ENCODE measurements at regions of chr14 and their contacts with region 1.

Region 1: GRCh38 chr14:50875359-50876070 is 3.7 kb downstream of the ABHD12B start:
- DNase-seq: peak; percentile 96
- H3K4me3 ChIP-seq: peak overlapping the region; percentile 63
- H3K27ac ChIP-seq: peak overlapping the region; percentile 95
- H3K4me1 ChIP-seq: peaks cover 66% of the 10 kb centered on the region
- CTCF ChIP-seq: no peak

Region 2: DNA sequence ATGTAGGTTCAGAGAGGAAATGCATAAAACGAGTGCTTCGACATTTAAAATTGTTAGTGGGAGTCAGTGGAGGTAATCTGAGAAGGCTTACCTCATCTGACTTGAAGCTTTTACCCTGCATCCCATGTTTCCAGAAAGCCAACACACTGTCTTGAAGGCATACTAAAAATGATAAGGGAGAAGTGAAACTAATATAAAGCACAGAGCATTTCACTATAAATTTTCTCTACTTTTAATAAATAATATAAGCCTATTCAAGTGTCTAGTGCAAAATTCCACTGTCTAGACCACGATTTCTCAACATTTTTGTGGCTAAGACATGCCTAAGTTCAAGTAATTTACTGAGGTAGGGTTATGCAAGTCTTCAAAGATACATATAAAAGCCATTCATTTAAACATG is 449.7 kb before region 1 on chr14:
- CTCF ChIA-PET with region 1: no interaction called
- POLR2A ChIA-PET with region 1: no interaction called
- intact Hi-C with region 1: no loop called
- DNase-seq: no peak
- H3K4me3 ChIP-seq: no peak overlapping the region
- H3K27ac ChIP-seq: no peak overlapping the region
- H3K4me1 ChIP-seq: no peaks in the 10 kb centered on the region
- CTCF ChIP-seq: no peak

Region 3: DNA sequence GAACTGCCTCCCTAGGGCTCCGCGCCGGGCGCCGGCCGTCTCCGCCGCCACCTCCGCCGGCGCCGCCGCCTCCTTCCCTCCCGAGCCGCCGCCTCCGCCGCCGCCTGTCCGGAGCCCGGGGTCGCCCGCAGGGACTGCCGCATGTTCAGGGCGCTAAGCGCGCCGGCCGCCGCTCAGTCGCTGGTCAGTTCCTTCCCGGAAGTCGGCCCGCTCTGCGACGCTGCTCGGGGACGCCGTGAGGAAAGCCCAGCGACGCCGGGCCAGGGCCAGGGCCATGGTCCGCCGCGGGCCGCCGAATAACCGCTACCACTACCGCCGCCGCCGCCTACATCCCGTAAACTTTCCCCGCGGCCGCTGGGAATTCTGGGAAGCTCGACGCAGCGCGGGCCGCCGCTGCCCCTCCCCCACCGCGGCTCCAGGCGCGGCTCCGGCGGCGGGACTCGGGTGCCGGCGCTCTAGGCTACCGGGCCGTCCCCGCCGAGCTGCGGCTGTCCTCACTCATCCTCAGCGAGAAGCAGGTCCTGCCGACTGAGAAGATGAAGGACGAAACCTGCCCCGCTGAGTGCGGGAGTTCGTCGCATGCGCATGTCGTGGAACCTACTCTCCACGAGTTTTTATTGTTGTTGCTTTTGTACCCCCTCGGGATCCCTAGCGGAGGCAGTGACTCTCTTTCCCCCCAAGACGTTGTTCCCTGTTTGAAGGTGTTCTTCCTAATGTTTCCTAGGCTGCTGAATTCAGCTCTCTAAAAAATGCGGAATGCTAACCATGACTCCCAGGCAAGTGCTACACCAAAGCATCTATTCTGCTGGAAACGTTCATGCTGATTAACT is 207.3 kb before region 1 on chr14 and contains the start of gene SAV1:
- CTCF ChIA-PET with region 1: interaction called, 3 read pairs
- POLR2A ChIA-PET with region 1: no interaction called
- intact Hi-C with region 1: loop called (anchors 5 kb)
- DNase-seq: peak; percentile 65
- H3K4me3 ChIP-seq: peak within 1 kb of the TSS; percentile 92
- H3K27ac ChIP-seq: peak within 1 kb of the TSS; percentile 40
- H3K4me1 ChIP-seq: peaks cover 22% of the 10 kb centered on the region
- CTCF ChIP-seq: 0 out of 2 replicates have a peak, but pooled peaks have one; percentile 9
- total RNA-seq, gene SAV1: 6.7 and 10.4 TPM in 2 replicates

Region 4: DNA sequence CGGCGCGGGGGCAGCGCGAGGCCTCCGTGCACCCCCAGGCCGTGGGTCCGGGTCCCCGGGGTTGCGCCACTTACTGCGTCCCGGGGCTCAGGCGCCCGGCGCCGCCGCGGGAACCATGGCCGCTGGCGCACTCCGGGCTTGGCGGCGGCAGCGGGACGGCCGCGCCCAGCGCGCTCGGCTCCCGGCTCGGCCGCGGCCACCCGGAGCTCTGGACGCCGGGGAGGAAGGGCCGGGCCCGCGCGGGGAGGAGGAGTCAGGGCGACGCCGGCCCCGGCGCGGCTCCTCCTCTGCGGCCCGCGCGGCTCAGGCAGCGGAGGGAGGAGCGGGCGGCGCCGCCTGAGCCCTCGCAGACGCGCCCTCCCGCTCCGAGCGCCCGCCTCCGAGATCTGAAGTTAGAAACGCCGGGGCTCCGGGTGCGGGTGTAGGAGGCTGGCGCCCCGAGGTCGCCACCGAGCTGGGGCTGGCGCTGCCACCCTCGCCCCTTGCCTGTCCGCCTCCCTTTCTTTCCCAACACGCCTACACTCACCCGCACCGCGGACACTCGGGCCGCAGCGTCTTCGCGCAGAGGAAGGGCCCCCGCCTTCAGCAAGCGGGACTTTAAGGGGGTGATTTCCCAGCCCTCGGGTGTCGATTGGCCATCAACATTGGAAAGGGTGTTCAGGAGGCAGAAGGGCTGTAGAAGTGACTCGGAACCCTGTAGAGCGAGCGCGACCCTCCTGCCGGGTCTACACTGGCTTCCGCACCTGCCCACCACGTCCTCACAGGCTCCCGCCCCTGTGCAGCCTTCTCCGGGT is 44.4 kb before region 1 on chr14 and contains the start of gene NIN:
- CTCF ChIA-PET with region 1: no interaction called
- POLR2A ChIA-PET with region 1: interaction called, 17 read pairs
- intact Hi-C with region 1: no loop called
- DNase-seq: peak; percentile 87
- H3K4me3 ChIP-seq: peak within 1 kb of the TSS; percentile 71
- H3K27ac ChIP-seq: peak within 1 kb of the TSS; percentile 74
- H3K4me1 ChIP-seq: peaks cover 66% of the 10 kb centered on the region
- CTCF ChIP-seq: no peak
- total RNA-seq, gene NIN: 79.5 and 95.3 TPM in 2 replicates

Region 5: DNA sequence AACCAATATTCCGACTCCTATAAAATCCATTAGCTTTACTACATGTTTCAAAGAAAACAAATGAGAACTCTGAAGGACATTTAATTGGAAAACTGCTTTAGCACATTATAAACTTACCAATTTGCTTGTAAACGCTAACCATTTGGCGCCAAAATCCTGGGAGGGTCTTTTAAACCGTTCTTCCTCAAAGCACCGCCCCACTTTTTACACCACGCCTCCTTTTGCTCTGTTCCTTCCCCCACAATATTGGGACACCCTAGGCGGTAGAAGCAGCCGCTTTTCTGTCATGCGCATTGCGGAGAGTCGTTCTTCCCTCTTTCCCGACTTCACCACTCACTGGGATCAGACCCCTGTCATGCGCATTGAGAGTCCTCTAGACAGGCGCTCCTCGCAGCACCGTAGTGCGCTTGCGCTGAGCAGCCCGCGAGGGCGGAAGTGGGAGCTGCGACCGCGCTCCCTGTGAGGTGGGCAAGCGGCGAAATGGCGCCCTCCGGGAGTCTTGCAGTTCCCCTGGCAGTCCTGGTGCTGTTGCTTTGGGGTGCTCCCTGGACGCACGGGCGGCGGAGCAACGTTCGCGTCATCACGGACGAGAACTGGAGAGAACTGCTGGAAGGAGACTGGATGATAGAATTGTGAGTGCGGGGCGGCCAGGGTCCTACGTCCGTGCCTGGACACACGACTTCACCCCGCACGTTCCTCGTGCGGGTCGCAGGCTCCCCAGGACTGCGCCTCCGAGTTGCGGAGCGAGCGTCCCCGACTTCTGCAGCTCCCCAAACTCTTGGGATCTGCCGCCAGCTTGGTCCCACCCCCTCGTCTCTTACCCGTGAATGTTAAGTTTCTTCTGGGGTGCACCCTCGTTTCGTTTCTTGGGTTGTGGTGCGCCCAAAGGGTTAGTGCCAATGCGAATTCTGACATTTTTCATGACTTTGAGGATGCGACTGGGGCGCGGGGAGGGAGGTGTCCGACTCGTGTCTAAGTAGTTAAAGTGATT is 364.6 kb after region 1 on chr14 and contains the start of gene TMX1:
- CTCF ChIA-PET with region 1: no interaction called
- POLR2A ChIA-PET with region 1: no interaction called
- intact Hi-C with region 1: loop called (anchors 5 kb)
- DNase-seq: peak; percentile 97
- H3K4me3 ChIP-seq: peak within 1 kb of the TSS; percentile 98
- H3K27ac ChIP-seq: peak within 1 kb of the TSS; percentile 60
- H3K4me1 ChIP-seq: peaks cover 44% of the 10 kb centered on the region
- CTCF ChIP-seq: peak; percentile 37; the same call in 1 of the 2 replicates
- total RNA-seq, gene TMX1: 33.6 and 34.3 TPM in 2 replicates